ENCODE measurements at regions of chr2 and their contacts with region 1.

Region 1: DNA sequence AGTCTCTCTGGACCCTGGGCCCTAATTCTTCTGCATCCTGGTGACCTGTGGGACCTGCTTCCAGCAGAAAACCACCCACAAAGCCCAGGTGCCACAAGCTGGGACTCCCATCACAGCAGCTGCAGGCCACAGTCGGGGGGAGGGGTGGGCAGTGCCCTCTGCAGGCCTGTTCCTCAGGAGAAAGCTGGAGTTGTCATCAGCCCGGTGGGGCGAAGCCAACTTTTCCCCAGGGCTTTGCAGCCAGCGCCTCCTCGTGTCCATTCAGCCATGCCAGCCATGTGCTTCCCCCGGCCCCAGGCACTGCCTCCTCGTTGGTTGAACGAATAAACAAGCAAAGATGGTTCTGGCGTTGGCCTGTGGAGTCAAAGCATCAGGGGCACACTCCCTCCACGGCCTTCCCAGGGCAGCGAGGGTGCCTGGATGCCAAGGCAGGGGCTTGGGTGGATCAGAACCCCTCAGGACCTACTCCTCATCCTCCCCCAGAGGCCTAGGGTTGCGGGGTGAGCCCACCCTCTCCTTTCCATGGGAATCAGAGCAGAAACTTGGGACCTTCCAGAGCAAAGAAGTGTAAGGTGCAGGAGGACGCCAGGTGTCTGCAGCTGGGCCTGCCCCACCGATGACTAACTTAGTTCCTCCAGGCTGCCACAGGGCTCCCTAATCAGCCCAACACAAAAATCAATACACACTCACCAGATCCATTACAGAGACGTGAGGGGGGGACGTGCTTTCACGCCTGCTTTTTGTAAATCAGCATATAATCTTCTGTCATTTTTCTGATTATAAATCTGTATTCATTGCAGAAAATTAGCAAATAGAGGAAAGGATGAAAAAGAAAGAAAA is 75.7 kb upstream of the RAB6C start:
- DNase-seq: peak; percentile 63
- ATAC-seq: peak; percentile 86
- H3K4me3 Mint-ChIP-seq: no peak overlapping the region
- H3K27ac Mint-ChIP-seq: no peak overlapping the region
- H3K4me1 Mint-ChIP-seq: peaks cover 9% of the 10 kb centered on the region
- H3K27me3 Mint-ChIP-seq: no peaks in the 10 kb centered on the region; the same call in none of the 2 replicates
- CTCF ChIP-seq: no peak

Region 2: DNA sequence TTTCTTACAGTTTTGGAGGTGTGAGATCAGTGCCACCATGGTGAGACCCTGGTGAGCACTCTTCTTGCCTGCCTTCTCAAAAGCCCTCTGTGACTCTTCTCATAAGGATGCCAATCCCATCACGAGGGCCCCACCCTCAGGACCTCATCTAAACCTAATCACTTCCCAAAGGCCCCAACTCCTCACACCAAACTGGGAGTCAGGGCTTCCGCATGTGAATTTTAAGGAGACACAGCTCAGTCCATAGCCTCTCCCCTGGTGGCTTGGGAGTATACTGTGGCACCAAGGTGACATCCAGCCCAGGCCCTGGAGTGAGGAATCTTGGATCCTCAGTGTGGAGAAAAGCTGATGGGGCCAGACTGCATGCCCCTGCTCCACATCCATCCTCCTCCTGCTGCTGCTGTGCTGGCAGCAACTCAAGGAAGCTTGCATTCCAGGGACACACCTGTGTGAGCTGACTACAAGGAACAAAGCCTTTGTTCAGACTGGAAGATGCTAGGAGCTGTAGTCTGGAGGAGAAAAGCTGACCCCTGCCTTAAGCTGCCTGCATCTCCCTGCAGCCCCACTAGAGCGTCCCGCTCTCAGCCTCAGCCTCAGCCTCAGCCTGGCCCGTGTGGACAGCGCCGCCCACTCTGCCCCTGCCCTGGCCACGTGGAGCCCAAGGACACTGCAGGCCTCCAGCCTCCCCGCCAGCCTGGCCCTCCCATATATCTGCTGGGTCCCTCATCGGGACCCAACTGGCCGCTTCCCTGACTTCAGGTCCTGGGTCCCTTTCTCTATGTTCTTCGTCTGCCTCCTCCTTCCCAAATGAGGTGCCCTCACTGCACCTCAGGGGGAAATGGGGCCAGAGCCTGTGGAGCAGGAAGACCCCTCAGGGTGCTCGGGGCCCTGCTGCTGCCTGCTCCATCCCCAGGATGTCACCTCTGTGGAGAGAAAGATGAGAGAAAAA is 12.2 kb before region 1 on chr2:
- CTCF ChIA-PET with region 1: interaction called, 10 read pairs
- POLR2A ChIA-PET with region 1: no interaction called
- DNase-seq: no peak
- ATAC-seq: peak; percentile 92
- H3K4me3 Mint-ChIP-seq: no peak overlapping the region
- H3K27ac Mint-ChIP-seq: no peak overlapping the region
- H3K4me1 Mint-ChIP-seq: peaks cover 9% of the 10 kb centered on the region
- H3K27me3 Mint-ChIP-seq: no peaks in the 10 kb centered on the region; the same call in 1 of the 2 replicates
- CTCF ChIP-seq: no peak

Measured in WTC11 (cell line).